OCI-LY7 (cell line): ENCODE measurements at regions of chr1 and their contacts with region 1.

Region 1: DNA sequence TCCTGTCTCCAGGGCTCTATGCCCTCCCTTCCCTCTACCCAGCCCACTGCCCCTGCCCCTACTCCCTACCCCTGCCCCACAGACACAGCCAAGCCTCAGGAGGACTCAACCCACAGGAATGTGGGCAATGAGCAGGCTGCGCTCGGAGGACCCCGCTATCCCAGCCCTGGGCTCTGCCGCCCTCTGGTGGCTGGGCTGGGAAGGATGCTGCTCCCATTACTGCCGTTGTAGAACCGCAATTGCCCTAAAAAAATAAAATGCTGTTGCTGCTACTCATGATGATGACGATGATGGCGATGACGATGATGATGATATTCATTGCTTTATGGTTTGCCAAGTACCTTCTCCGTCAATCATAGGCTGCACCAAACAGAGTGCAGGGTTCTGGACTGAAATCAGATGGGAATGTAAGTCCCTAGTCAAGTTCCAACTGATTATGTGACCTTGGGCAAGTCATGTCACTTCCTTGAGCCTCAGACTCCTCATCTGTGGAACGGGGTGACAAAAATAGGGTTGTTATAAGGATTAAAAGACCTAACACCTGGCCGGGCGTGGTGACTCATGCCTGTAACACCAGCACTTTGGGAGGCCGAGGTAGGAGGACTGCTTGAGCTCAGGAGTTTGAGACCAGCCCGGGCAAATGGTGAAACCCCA is 24.6 kb downstream of the ARHGEF19 start:
- DNase-seq: peak; percentile 66
- H3K4me3 ChIP-seq: no peak overlapping the region
- H3K27ac ChIP-seq: no peak overlapping the region
- H3K4me1 ChIP-seq: no peaks in the 10 kb centered on the region
- CTCF ChIP-seq: peak; percentile 99

Region 2: DNA sequence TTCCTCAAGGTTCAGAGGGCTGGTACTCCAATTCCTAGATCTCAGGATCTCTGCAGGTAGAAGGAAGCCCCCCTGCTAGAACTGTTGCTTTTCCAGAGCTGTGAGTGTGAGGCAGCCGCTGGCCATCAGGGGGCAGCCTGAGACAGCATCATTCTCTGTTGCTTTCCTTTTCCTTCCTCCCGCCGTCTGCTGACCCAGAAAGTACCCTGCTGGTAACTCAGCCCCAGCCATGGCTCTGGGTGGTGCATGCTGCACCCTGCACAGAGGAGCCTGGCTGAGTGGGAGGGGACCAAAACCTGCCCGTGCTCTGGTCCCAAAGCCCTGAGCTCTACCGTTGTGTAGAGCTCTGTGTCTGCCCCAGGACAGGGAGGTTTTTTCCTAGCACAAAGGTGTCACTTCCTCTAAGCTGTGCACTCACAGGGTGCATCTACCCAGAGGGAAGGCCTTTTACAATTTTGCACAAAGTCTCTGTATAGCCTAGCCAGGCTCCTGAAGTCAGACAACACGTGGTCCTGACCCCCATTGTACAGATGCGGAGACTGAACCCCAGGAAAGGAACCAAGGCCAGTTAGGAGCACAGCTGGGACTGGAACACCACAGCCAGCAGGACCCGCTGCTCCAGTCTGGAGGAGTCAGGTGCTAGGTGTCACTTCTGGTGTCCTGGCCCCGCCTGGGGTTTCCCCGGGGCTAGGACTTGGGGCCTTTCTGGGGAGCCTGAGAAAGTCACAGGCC is 108.8 kb before region 1 on chr1:
- CTCF ChIA-PET with region 1: interaction called, 7 read pairs
- POLR2A ChIA-PET with region 1: interaction called, 4 read pairs
- intact Hi-C with region 1: loop called (anchors 1 kb)
- DNase-seq: peak; percentile 77
- H3K4me3 ChIP-seq: no peak overlapping the region
- H3K27ac ChIP-seq: no peak overlapping the region
- H3K4me1 ChIP-seq: peaks cover 6% of the 10 kb centered on the region
- CTCF ChIP-seq: peak; percentile 91

Region 3: DNA sequence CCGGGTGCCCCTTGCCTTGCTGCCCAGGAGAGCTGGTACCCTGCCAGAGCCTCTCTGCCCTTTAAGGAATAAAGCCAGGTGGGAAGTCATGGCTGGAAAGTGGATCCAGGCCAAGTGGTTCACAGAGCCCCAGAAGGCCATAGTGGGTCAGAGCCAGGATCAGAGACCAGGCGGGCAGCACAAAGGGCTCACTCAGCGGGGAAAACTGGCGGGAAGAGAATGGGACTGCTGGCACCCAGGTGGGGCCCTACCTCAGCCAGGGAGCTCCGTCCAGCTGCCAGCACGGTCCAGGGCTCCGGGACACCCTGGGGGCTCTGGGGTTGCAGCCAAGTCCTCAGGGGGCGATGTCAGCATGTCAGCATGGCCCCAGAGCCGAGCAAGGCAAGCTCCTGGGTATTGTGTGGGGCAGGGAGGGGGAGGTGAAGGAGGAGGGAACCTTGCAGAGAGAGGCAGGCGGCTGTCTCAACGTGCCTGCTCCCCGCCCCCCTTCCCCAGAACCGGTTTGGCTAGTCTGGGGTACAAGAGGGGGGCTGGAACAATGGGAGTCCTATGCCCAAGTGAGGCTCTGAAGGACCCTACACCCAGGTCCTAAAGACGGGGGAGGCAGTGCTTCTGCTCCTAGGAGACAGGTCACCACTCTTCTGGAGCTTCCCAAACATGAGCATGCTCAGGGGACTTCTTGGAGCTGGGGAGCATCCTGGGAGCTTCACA is 24.5 kb after region 1 on chr1 and contains the start of gene ARHGEF19:
- CTCF ChIA-PET with region 1: no interaction called
- POLR2A ChIA-PET with region 1: no interaction called
- intact Hi-C with region 1: no loop called
- DNase-seq: no peak
- H3K4me3 ChIP-seq: no peak within 1 kb of the TSS
- H3K27ac ChIP-seq: no peak within 1 kb of the TSS
- H3K4me1 ChIP-seq: peaks cover 10% of the 10 kb centered on the region
- CTCF ChIP-seq: no peak
- total RNA-seq, gene ARHGEF19: 2.7 and 5.9 TPM in 2 replicates